Transverse colon (tissue), 4 donors: ENCODE measurements at regions of chr13 and their contacts with region 1.

Region 1: DNA sequence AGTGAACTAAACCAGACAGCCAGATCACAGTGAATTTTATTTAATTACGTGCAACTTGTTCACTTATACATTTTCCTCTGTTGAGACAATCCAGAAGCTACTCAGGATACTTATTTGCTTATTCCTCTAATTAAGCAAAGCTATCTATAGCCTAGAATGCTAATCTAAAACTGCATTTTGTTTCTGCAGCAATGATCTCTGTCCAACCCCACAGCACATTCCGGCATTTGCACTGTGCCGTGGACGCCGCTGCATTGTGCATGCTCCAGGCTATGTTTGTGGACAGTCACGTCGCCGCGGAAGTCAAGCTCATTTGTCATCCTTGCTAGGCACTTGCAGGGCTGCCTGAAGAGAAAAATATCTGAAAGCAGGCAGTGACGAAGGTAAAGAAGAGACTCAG is 406.9 kb downstream of the RFC3 start:
- DNase-seq: no peak
- H3K4me3 ChIP-seq: no peak overlapping the region
- H3K27ac ChIP-seq: no peak overlapping the region
- H3K4me1 ChIP-seq: no peaks in the 10 kb centered on the region
- H3K27me3 ChIP-seq: no peaks in the 10 kb centered on the region
- CTCF ChIP-seq: no peak
- EP300 ChIP-seq: no peak
- POLR2A ChIP-seq: no peak

Region 2: DNA sequence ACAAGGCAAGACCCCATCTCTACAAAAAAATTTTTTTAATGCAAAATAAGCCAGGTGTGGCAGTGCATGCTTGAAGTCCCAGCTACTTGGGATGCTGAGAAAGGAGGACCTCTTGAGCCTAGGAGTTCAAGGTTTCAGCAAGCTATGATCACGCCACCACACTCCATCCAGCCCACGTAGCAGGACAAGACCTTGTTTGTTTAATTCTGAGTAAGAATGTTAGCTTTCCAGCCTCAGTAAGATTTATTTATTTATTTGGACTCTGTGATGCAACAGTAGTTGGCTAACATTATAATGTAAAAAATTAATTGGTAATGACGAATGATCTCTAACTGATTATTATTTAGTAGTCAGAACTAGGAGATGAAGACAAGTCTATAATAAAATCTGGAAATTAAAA is 1709.6 kb before region 1 on chr13:
- in situ Hi-C with region 1: no loop called
- intact Hi-C with region 1: loop called (anchors 5 kb)
- DNase-seq: no peak
- H3K4me3 ChIP-seq: no peak overlapping the region
- H3K27ac ChIP-seq: no peak overlapping the region
- H3K4me1 ChIP-seq: no peaks in the 10 kb centered on the region
- H3K27me3 ChIP-seq: no peaks in the 10 kb centered on the region
- CTCF ChIP-seq: no peak
- EP300 ChIP-seq: no peak
- POLR2A ChIP-seq: no peak

Region 3: DNA sequence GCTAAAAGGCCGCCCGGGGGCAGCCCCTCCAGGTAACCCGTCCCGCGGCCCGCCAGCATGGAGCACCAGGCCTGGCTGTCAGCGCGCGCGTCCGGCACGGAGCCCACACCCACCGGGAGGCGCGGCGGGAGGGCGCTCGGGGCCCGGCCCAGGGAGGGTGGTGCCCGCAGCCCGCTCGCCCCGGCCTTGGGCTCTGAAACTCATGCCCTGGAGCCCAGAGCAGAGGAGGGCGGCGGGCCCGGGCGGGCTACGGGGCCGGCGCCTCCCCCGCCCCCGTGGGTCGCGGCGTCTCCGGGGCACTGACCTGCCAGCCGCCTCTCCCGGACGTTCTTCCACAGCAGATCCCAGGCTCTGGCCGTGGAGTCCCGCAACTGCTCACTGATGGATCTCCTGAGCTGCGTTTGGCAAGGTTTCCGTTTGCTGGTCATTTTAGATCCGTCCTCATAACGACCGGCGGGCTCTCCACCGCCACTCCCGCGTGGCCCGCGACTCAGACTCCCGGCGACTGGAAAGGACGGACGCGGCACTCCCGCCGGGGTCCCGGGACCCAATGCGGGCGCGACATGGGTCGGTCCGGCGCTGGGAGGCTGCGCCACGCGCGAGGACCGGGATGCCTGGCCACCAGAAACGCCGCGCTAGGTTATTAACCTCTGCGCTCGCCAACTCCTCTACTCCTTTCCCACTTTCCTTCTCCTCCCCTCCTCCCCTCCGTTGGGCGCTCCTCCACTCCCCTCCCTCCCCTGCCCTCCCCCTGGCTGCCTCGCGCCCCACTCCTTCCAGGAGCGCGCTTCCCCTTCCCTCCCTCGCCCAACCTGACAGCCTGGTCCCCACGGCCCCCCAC is 874.7 kb before region 1 on chr13:
- in situ Hi-C with region 1: no loop called
- intact Hi-C with region 1: no loop called
- DNase-seq: peak; percentile 60
- H3K4me3 ChIP-seq: peak overlapping the region; percentile 57 to 87 (median 68)
- H3K27ac ChIP-seq: peak overlapping the region; percentile 84 to 88 (median 88)
- H3K4me1 ChIP-seq: peaks cover 0 to 28% (median 20%) of the 10 kb centered on the region in 4 donors
- H3K27me3 ChIP-seq: no peaks in the 10 kb centered on the region
- CTCF ChIP-seq: no peak
- EP300 ChIP-seq: no peak
- POLR2A ChIP-seq: peak; percentile 23

Region 4: DNA sequence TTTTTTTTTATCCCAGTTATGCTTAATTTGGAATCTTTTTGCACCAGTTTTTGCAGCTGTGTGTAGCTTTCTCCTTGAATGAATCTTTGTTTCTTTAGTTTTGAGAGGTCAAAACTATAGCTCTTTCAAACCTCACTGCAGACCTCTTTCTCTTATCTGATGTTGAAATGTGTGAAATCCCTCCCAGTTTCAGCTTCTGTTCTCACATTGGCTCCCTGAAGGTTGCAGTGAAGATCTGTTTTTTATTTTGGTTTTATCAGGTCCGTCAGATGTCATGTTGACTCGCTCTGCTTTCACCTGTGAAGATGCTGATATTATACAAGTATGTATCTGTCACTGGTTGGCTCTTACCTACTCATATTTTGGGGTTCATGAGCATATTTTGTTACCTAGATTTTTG is 34.9 kb before region 1 on chr13:
- in situ Hi-C with region 1: no loop called
- intact Hi-C with region 1: no loop called
- DNase-seq: no peak
- H3K4me3 ChIP-seq: no peak overlapping the region
- H3K27ac ChIP-seq: no peak overlapping the region
- H3K4me1 ChIP-seq: no peaks in the 10 kb centered on the region
- H3K27me3 ChIP-seq: no peaks in the 10 kb centered on the region
- CTCF ChIP-seq: no peak
- EP300 ChIP-seq: no peak
- POLR2A ChIP-seq: no peak